Activated CD8-positive, alpha-beta T cell treated with anti-CD3 and anti-CD28 coated beads, Interleukin-2, amount 10 ng/mL, durations not matched to agents 7 days and 5 days (primary cell): ENCODE measurements at regions of chr14 and their contacts with region 1.

Region 1: DNA sequence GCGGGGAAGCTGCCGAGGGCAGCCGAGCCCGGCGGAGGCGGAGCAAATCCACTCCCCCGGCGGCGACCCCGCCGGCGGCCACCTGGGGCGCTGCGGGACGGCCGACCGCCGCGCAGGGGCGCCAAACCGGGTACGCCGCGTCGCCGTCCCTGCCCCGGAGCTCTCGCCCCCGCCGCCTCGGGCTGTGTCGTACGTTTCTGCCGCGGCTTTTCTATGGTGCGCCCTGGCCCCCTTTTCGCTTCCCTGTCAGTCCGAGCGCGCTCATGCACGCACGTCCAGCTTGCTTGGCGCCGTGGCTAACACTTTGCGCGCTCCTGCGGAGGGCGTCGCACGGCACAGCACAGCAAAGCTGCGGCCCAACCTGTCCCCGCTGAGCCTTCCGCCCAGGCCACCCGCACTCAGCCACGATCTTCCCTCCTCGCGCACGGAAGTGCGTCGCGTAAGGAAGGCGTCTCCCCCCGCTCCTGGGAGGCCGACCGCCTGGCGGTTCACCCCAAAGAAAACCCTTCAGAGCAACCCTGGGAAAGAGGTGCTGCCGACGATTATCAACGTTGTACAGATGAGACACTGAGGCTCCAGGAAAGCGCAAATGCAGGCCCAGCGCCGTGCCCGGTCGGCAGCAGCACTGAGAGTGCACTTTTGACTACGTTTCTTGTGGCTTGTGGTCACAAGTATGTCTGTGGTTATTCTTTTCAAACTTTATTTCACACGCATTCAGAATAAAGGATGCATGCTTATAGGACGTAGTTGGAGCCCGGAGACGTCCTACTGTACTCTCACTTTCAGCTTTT is at the start of gene HECTD1:
- DNase-seq: peak; percentile 89
- ATAC-seq: peak; percentile 78
- H3K4me3 Mint-ChIP-seq: peak within 1 kb of the TSS; percentile 82
- H3K27ac Mint-ChIP-seq: peak within 1 kb of the TSS; percentile 100
- H3K4me1 Mint-ChIP-seq: peaks cover 45% of the 10 kb centered on the region
- H3K27me3 Mint-ChIP-seq: no peaks in the 10 kb centered on the region
- total RNA-seq, gene HECTD1: 90.6 to 105 TPM

Region 2: GRCh38 chr14:30906752-30907658 is 300.9 kb before region 1 on chr14:
- CTCF ChIA-PET with region 1: no interaction called
- POLR2A ChIA-PET with region 1: no interaction called
- DNase-seq: no peak
- ATAC-seq: no peak
- H3K4me3 Mint-ChIP-seq: no peak overlapping the region
- H3K27ac Mint-ChIP-seq: no peak overlapping the region
- H3K4me1 Mint-ChIP-seq: no peaks in the 10 kb centered on the region
- H3K27me3 Mint-ChIP-seq: no peaks in the 10 kb centered on the region

Region 3: DNA sequence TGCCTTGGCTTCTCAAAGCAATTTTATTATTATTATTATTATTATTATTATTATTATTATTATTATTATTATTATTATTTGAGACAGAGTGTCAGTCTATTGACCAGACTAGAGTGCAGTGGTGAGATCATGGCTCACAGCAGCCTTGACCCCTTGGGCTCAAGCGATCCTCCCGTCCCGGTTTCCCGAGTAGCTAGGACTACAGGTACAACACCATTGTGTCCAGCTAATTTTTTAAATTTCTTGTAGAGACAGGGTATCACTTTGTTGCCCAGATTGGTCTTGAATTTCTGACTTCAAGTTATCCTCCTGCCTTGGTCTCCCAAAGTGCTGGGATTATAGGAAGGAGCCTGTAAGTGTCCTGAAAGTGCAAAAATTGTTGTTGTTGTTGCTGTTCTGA is 194.1 kb before region 1 on chr14:
- CTCF ChIA-PET with region 1: no interaction called
- POLR2A ChIA-PET with region 1: no interaction called
- DNase-seq: no peak
- ATAC-seq: no peak
- H3K4me3 Mint-ChIP-seq: no peak overlapping the region
- H3K27ac Mint-ChIP-seq: no peak overlapping the region
- H3K4me1 Mint-ChIP-seq: peaks cover 2% of the 10 kb centered on the region
- H3K27me3 Mint-ChIP-seq: no peaks in the 10 kb centered on the region

Region 4: DNA sequence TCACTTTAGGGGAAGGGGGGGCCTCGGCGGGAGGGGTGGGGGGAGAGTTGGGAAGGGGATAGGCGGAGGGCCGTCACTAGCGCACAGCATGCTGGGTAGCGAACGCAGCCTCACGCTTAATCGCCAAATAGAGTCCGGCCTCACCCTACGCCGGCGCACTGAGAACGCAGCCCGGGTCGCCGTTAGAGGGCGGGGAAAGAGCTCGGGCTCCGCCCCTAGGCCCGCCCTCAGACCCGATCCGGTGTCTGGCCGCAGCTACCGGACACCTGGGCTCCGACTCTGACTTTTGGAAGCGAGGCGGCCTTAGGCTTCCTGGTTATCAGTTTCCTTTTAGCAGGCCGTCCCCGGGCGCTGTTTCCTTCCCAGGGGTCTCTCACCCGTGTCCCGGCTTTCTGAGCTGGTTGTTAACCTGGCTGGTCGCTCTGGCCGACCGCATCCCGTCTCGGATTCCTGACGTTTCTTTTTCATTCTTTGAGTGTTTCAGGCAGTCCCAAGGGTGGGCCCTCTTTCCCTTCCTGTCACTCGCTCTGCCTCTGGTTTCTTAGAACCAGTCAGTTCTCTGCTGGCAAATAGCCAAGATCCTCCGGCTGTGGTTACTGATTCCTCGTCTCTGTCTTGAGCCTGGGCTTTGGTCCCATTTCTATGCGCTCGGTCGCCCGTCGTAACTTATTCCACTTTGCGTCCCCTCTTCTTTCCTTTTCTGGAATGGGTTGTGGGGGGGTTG is 181.4 kb before region 1 on chr14:
- CTCF ChIA-PET with region 1: interaction called, 18 read pairs
- POLR2A ChIA-PET with region 1: interaction called, 11 read pairs
- DNase-seq: peak; percentile 93
- ATAC-seq: peak; percentile 94
- H3K4me3 Mint-ChIP-seq: peak overlapping the region; percentile 93
- H3K27ac Mint-ChIP-seq: peak overlapping the region; percentile 97
- H3K4me1 Mint-ChIP-seq: peaks cover 52% of the 10 kb centered on the region
- H3K27me3 Mint-ChIP-seq: no peaks in the 10 kb centered on the region

Region 5: DNA sequence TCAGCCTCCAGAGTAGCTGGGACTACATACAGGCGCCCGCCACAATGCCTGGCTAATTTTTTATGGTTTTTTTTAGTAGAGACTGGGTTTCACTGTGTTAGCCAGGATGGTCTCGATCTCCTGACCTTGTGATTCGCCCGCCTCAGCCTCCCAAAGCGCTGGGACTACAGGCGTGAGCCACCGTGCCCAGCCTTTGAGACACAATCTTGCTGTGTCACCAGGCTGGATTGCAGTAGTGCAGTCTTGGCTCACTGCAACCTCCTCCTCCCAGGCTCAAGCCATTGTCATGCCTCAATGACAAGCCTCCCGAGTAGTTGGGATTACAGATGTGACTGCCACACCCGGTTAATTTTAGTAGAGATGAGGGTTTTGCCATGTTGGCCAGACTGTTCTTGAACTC is 160.4 kb before region 1 on chr14:
- CTCF ChIA-PET with region 1: no interaction called
- POLR2A ChIA-PET with region 1: no interaction called
- DNase-seq: no peak
- ATAC-seq: no peak
- H3K4me3 Mint-ChIP-seq: no peak overlapping the region
- H3K27ac Mint-ChIP-seq: no peak overlapping the region
- H3K4me1 Mint-ChIP-seq: peaks cover 4% of the 10 kb centered on the region
- H3K27me3 Mint-ChIP-seq: no peaks in the 10 kb centered on the region

Region 6: DNA sequence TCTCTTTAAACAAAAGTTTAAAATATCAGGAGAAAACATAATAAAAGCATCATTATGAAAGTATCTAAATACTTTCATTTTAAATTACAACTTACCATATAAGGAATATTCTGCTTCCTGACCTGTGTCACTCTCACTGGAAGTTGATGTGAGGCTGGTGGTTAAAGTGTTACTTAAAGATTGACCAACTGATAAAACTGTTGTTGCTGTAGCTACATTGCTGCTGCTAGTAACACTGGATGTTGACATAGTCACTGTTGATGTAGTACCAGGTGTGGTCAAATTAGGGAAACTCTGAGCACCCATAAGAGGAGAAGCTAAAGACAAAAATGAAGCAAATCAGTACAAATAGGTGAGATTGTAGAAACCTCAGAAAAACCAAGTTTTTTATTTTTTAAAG is 80.3 kb before region 1 on chr14:
- CTCF ChIA-PET with region 1: interaction called, 4 read pairs
- POLR2A ChIA-PET with region 1: interaction called, 30 read pairs
- DNase-seq: peak; percentile 70
- ATAC-seq: peak; percentile 91
- H3K4me3 Mint-ChIP-seq: no peak overlapping the region
- H3K27ac Mint-ChIP-seq: peak overlapping the region; percentile 60
- H3K4me1 Mint-ChIP-seq: peaks cover 46% of the 10 kb centered on the region
- H3K27me3 Mint-ChIP-seq: no peaks in the 10 kb centered on the region

Region 7: DNA sequence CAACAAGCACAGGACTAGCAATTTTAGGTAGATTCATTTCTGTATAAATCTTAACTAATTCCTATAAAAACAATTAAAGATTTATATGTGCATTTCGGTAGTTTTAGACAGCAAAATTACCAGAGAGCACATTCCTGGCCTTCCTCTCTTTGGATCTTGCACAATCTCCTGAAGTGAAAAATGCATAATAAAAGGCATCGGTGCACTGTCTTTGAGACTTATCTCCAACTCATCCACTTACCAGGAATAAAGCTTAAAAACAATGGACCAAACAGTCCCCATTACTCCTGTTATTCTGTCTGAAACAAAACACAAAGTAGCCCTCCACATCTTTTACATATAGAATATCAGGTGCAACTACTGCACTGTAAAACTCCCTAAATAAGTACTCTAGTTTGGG is 69.6 kb before region 1 on chr14:
- CTCF ChIA-PET with region 1: no interaction called
- POLR2A ChIA-PET with region 1: no interaction called
- DNase-seq: no peak
- ATAC-seq: no peak
- H3K4me3 Mint-ChIP-seq: no peak overlapping the region
- H3K27ac Mint-ChIP-seq: no peak overlapping the region
- H3K4me1 Mint-ChIP-seq: no peaks in the 10 kb centered on the region
- H3K27me3 Mint-ChIP-seq: no peaks in the 10 kb centered on the region

Region 8: DNA sequence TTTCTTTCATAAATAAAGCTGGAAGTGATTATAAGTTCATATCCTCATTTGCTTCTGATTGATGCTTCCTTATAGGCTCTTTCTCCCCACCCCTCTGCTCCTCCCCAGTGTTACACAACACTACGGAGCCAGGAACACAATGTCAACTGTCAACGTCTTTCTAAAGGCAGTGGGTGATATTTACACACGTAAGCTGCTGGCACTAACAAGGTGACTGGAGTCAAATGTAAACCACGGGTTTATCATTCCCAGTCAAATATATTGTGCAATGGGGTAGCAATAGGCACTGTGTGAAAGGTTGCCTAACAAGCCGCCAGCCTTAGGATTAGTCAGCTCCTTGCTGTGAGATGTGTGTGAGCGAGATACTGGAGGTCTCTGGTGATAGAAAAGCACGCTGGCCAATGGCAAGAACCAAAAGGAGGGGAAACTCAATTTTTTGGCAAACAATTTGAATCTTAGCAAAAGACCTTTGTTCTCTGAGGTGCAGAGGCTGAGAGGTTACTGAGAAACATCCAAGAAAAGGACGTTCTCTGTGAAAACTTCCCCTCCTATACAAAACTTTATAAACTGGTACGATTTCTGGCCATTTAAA is 21.8 kb after region 1 on chr14:
- CTCF ChIA-PET with region 1: no interaction called
- POLR2A ChIA-PET with region 1: interaction called, 11 read pairs
- DNase-seq: no peak
- ATAC-seq: no peak
- H3K4me3 Mint-ChIP-seq: no peak overlapping the region
- H3K27ac Mint-ChIP-seq: no peak overlapping the region
- H3K4me1 Mint-ChIP-seq: peaks cover 2% of the 10 kb centered on the region
- H3K27me3 Mint-ChIP-seq: peaks cover 5% of the 10 kb centered on the region

Region 9: DNA sequence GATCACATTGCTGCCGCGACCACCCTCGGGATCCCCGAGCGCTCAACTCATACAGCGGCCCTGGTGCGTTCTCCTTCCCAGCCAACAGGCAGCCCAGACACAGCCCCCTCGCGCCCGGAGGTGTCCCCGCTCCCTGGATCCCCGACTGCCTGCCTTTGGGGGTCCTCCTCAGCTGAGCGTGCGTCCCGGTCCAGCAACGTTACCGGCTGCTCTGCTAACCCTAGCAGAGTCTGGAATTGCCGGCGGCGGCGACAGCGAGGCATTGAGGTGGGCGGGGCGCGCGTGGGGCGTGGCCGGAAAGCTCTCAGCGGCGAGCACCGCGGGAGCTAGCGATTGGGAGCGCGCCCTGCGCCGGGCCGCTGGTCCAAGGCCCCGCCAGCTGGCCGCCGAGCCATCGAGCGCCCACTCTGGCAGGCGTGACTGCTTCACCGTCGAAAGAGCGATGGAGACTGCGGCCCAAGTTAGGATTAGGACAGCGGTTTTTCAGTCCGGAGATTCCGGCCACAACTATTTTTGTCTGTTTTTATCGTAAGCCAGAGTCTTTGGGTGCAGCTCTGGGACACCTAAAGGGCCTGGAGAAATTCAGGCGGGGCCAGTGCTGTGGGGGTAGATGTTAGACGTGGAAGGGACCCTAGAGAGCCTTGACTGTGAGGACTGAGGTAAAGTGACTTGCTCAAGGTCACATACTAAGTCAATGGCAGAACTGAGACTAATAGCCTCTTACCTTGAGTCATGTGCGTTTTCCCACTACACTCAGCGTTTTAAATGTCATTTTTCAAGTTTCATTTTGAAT is 212.6 kb after region 1 on chr14 and contains the start of gene HEATR5A:
- CTCF ChIA-PET with region 1: interaction called, 7 read pairs
- POLR2A ChIA-PET with region 1: interaction called, 20 read pairs
- DNase-seq: peak; percentile 93
- ATAC-seq: peak; percentile 96
- H3K4me3 Mint-ChIP-seq: peak within 1 kb of the TSS; percentile 96
- H3K27ac Mint-ChIP-seq: peak within 1 kb of the TSS; percentile 86
- H3K4me1 Mint-ChIP-seq: peaks cover 19% of the 10 kb centered on the region
- H3K27me3 Mint-ChIP-seq: no peaks in the 10 kb centered on the region
- total RNA-seq, gene HEATR5A: 8.5 to 9.4 TPM